Activated B cell treated with CpG ODN at 0.5 μM for 24 hours (primary cell): ENCODE measurements at regions of chr1 and their contacts with region 1.

Region 1: GRCh38 chr1:20521960-20522861 is 14.3 kb upstream of the MUL1 start:
- DNase-seq: peak; percentile 30
- ATAC-seq: peak; percentile 60
- H3K4me3 Mint-ChIP-seq: no peak overlapping the region
- H3K27ac Mint-ChIP-seq: no peak overlapping the region
- H3K4me1 Mint-ChIP-seq: no peaks in the 10 kb centered on the region
- H3K27me3 Mint-ChIP-seq: peaks cover 18% of the 10 kb centered on the region
- CTCF ChIP-seq: peak; percentile 35

Region 2: DNA sequence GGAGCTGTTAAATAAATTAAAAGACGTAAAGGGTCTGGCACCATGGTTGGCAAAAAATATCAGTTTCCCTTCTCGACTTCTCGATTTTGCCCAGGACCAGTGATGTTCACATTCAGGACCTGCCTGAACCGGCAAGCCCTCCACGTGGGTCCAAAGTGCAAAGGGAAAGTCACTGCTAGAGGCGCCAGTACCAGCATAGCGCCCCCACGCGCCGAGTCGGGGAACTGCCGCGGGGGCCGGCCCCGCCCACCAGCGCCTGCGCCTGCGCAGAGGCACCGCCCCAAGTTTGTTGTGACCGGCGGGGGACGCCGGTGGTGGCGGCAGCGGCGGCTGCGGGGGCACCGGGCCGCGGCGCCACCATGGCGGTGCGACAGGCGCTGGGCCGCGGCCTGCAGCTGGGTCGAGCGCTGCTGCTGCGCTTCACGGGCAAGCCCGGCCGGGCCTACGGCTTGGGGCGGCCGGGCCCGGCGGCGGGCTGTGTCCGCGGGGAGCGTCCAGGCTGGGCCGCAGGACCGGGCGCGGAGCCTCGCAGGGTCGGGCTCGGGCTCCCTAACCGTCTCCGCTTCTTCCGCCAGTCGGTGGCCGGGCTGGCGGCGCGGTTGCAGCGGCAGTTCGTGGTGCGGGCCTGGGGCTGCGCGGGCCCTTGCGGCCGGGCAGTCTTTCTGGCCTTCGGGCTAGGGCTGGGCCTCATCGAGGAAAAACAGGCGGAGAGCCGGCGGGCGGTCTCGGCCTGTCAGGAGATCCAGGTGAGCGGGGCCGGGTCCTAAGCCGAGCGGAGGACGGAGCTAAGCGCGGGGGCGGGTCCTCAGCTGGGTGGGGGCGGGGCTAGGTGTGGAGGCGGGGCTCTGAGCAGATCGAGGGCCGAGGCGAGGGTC is 111.2 kb after region 1 on chr1 and contains the start of gene PINK1:
- CTCF ChIA-PET with region 1: interaction called, 7 read pairs
- POLR2A ChIA-PET with region 1: no interaction called
- intact Hi-C with region 1: loop called (anchors 2 kb)
- DNase-seq: peak; percentile 92
- ATAC-seq: peak; percentile 94
- H3K4me3 Mint-ChIP-seq: peak within 1 kb of the TSS; percentile 88
- H3K27ac Mint-ChIP-seq: peak within 1 kb of the TSS; percentile 80
- H3K4me1 Mint-ChIP-seq: peaks cover 12% of the 10 kb centered on the region
- H3K27me3 Mint-ChIP-seq: no peaks in the 10 kb centered on the region
- CTCF ChIP-seq: peak; percentile 94
- total RNA-seq, gene PINK1: 3.4 and 4.2 TPM in 2 replicates

Region 3: GRCh38 chr1:20640183-20640597 is 118.0 kb after region 1 on chr1:
- CTCF ChIA-PET with region 1: interaction called, 7 read pairs
- POLR2A ChIA-PET with region 1: no interaction called
- intact Hi-C with region 1: loop called (anchors 1 kb)
- DNase-seq: no peak
- ATAC-seq: peak; percentile 72
- H3K4me3 Mint-ChIP-seq: no peak overlapping the region
- H3K27ac Mint-ChIP-seq: no peak overlapping the region
- H3K4me1 Mint-ChIP-seq: peaks cover 3% of the 10 kb centered on the region
- H3K27me3 Mint-ChIP-seq: no peaks in the 10 kb centered on the region
- CTCF ChIP-seq: peak; percentile 42